ENCODE measurements at regions of chr9 and their contacts with region 1.

Region 1: DNA sequence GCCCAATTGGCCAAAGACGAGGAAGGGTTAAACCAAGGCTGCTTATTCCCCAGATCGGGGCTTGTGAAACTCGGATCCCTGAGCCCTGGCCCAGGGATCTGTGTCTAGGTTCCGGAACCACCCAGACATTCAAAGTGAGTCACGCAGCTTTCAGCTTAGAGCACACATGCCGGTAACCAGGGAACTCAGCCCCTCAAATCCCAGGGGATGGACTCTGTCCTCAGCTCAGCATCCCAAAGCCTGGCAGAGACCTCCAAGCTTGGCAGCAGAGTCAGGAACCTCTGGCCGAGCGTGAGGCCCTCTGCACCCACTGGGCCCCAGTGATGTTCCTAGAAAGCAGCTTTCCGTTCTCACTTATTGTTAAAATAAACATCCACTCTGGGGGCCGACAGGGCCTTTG is 5.1 kb downstream of the PNPLA7 start:
- DNase-seq: no peak
- CTCF ChIP-seq: no peak

Region 2: GRCh38 chr9:137534256-137535117 is 10.6 kb before region 1 on chr9:
- CTCF ChIA-PET with region 1: interaction called, 18 read pairs
- POLR2A ChIA-PET with region 1: no interaction called
- DNase-seq: peak; percentile 69
- CTCF ChIP-seq: peak; percentile 48